ENCODE measurements at regions of chr9 and their contacts with region 1.

Region 1: DNA sequence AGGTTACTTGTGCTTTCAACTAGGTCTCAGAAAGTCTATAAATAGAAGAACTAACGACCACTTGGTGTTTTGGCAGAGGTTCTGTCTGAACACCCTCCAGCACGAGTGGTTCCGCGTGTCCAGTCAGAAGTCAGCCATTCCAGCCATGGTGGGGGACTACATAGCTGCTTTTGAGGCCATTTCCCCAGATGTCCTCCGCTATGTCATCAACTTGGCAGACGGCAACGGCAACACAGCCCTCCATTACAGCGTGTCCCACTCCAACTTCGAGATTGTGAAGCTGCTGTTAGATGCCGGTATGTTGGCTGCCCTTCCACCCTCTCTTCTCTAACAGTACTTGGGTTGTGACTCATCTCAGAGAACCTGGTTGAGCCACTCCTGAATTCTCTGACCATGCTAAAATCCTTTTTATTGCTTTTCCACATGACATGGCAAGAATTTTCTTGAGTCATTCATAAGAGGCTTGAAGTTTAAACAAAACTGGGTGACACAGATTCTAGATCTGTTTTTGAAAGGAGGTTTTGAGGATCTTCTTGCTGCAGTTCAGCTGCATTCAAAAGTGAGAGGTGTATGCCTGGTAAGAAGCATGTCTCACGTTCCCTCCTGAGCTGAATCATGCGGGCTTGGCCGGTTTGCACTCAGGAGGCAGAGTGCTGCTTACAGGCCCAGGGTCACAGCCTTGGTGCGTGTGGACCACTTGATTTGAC is 103.1 kb upstream of the DMRT1 start:
- DNase-seq: peak in 3 of 10 donors; percentile 50 to 60 (median 53)
- H3K4me3 ChIP-seq: no peak overlapping the region
- H3K27ac ChIP-seq: peak overlapping the region in 55 of 59 donors; percentile 9 to 96 (median 69)
- H3K27me3 ChIP-seq: no peaks in the 10 kb centered on the region
- CTCF ChIP-seq: no peak

Region 2: DNA sequence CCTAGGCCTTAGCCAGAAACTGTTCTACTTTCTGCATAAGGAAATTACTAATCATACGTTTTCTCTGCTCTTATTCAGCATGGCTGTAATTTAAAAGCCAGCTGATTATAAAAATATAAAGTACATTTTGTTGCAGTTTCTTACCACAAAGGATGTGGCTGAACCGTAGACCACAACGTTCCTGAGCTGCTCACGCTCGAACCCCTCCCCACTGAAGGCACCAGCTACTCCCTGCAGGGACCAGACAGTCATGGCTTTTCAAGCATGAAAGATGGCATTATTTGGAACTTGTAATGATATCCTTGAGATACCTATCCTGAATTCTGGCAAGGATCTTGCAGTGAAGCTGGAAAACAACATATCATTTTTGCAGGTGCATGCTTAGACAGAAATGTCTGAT is 11.4 kb after region 1 on chr9:
- intact Hi-C with region 1: loop called in 1 of 2 experiments (anchors 1 kb)
- DNase-seq: no peak
- H3K4me3 ChIP-seq: no peak overlapping the region
- H3K27ac ChIP-seq: peak overlapping the region in 16 of 59 donors; percentile 2 to 87 (median 28)
- H3K27me3 ChIP-seq: no peaks in the 10 kb centered on the region
- CTCF ChIP-seq: no peak

Measured in dorsolateral prefrontal cortex (tissue), 120 donors.